Colonic mucosa (tissue), 4 donors: ENCODE measurements at regions of chr2 and their contacts with region 1.

Region 1: DNA sequence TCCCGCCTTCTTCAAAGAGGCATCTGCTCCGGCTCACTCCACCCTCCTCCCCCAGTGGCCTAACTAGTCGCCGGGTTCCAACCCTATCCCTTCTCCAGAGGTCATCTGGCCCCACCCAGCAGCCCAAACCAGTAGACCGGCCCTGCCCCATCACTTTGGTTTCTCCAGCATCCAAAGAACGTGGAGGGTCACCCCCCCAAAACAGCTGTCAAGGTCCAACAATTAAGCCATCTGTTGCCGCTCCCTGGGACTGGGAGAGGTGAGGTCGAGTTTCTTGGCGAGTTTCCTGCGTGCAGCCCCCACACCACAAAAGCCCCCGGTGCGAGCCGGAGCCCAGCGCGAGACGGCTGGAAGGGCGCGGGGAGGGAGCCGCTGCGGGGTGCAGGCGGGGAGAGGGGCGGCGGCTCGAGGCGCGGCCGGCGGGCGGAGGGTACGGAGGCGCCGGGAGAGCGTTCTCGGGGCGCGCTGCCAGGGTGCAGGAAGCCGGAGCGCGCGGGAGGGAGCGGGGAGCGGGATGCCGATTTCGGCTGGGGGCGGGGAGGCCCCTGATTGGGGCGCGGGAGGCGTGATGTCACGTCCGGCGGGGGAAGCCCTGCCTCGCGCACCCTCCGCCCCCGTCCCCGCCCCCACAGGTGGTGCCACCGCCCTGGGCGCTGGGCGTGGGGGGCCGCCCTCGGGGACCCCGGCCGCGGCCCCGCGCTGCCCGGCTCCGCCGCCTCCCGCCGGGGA is 571 bp upstream of the GPC1 start:
- DNase-seq: peak; percentile 94
- H3K4me3 ChIP-seq: peak overlapping the region; percentile 71
- H3K27ac ChIP-seq: peak overlapping the region; percentile 74
- H3K4me1 ChIP-seq: no peaks in the 10 kb centered on the region
- H3K27me3 ChIP-seq: peaks cover 9% of the 10 kb centered on the region
- CTCF ChIP-seq: no peak

Region 2: DNA sequence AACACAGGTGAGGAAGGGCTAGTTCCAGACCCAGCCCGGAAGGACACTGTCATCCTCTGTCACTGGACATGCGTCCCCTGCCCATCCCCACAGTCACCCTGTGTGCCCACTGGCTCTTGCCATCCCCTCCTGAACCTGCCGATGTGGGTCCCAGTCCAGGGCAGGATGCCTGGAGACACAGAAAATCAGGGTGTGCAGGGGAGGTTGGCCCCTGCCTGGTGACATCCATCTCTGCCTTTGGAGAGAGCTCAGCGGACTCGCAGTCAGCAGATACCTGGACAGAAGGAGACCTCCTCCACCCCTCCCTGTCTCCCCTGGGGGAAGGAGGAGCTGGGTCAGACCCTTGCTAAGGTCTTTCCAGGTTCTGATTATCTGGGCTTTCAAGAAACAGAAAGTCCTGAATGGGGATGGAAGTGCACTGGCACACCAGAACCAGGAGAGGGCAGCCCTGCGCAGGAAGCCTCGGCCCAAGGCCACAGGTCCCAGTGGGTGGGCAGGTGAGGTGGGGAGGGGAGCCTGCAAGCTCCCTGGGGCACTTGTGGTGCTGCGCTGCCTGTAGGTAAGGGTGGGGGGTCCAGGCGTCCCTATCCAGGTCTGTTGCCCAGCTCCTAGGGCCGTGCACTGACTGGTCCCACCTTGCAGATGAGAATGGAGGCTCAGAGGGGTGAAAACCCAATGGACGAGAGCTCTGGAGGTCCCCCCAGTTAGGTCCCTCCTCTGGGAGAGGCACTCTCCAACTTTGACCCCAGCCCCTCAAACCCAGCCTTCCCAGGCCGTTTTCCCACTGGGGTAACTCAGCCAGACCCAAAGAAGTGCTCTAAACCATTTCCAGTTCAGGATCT is 284.7 kb before region 1 on chr2:
- intact Hi-C with region 1: loop called (anchors 5 kb)
- DNase-seq: peak; percentile 25
- H3K4me3 ChIP-seq: no peak overlapping the region
- H3K27ac ChIP-seq: no peak overlapping the region
- H3K4me1 ChIP-seq: no peaks in the 10 kb centered on the region
- H3K27me3 ChIP-seq: no peaks in the 10 kb centered on the region
- CTCF ChIP-seq: peak; percentile 56

Region 3: GRCh38 chr2:240232961-240233893 is 201.7 kb before region 1 on chr2:
- intact Hi-C with region 1: loop called (anchors 2 kb)
- DNase-seq: peak; percentile 78
- H3K4me3 ChIP-seq: peak overlapping the region; percentile 19
- H3K27ac ChIP-seq: no peak overlapping the region
- H3K4me1 ChIP-seq: no peaks in the 10 kb centered on the region
- H3K27me3 ChIP-seq: no peaks in the 10 kb centered on the region
- CTCF ChIP-seq: peak; percentile 66